Caco-2 (cell line): ENCODE measurements at regions of chr6 and their contacts with region 1.

Region 1: GRCh38 chr6:20706243-20706938 is 172.1 kb downstream of the CDKAL1 start:
- DNase-seq: peak in 1 of 2 experiments; percentile 23
- H3K4me3 ChIP-seq: no peak overlapping the region
- H3K4me3 Mint-ChIP-seq: no peak overlapping the region
- H3K27ac Mint-ChIP-seq: no peak overlapping the region
- H3K4me1 ChIP-seq: peaks cover 23% of the 10 kb centered on the region
- H3K4me1 Mint-ChIP-seq: peaks cover 15% of the 10 kb centered on the region
- H3K27me3 ChIP-seq: no peaks in the 10 kb centered on the region
- H3K27me3 Mint-ChIP-seq: no peaks in the 10 kb centered on the region
- CTCF ChIP-seq: no peak

Region 2: DNA sequence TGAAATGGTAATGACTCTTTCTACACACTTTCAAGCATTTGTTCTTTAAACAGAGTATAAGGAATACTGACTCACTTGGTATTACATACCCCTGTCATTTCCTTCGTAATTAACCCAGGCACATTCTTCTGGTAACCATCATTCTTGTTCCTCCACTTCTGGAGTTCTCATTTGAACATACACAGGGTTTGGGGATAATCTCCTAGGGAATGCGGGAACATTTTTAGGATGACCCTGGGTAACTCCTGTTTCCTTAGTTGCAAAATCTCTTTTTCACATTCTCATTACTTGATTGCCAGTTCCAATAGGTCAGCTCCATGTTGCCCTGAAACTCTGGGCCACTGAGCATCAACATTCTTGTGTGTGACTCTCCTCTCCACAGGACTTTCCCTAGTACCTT is 356.2 kb before region 1 on chr6:
- CTCF ChIA-PET with region 1: no interaction called
- POLR2A ChIA-PET with region 1: interaction called, 19 read pairs
- intact Hi-C with region 1: no loop called
- DNase-seq: no peak
- H3K4me3 ChIP-seq: no peak overlapping the region
- H3K4me3 Mint-ChIP-seq: no peak overlapping the region
- H3K27ac Mint-ChIP-seq: no peak overlapping the region
- H3K4me1 ChIP-seq: peaks cover 18% of the 10 kb centered on the region
- H3K4me1 Mint-ChIP-seq: peaks cover 21% of the 10 kb centered on the region
- H3K27me3 ChIP-seq: no peaks in the 10 kb centered on the region
- H3K27me3 Mint-ChIP-seq: no peaks in the 10 kb centered on the region
- CTCF ChIP-seq: no peak

Region 3: DNA sequence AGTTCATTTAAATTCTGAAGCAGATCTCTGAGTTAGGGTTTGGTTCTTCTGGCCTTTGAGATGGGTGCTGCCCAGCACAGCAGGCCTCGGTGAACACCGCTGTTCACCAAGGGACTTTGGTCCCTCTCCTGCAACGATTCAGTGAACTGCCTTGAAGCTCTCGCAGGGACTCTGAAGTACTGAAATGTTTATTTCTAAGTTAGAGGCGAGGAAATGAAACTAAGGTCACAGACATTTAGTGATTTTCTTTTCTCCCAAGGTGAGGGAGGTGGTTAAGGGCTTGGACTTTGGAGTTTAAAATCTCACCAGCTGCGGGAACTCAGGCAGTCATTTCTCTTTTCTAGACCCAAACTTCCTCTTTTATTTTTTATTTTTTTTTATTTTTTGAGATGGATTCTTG is 278.5 kb before region 1 on chr6:
- CTCF ChIA-PET with region 1: no interaction called
- POLR2A ChIA-PET with region 1: no interaction called
- intact Hi-C with region 1: no loop called
- DNase-seq: no peak
- H3K4me3 ChIP-seq: no peak overlapping the region
- H3K4me3 Mint-ChIP-seq: no peak overlapping the region
- H3K27ac Mint-ChIP-seq: no peak overlapping the region
- H3K4me1 ChIP-seq: 0 out of 2 replicates have a peak, but pooled peaks cover 6% of the 10 kb centered on the region
- H3K4me1 Mint-ChIP-seq: peaks cover 11% of the 10 kb centered on the region
- H3K27me3 ChIP-seq: no peaks in the 10 kb centered on the region
- H3K27me3 Mint-ChIP-seq: no peaks in the 10 kb centered on the region
- CTCF ChIP-seq: no peak

Region 4: GRCh38 chr6:20610636-20611370 is 95.6 kb before region 1 on chr6:
- CTCF ChIA-PET with region 1: no interaction called
- POLR2A ChIA-PET with region 1: no interaction called
- intact Hi-C with region 1: no loop called
- DNase-seq: no peak
- H3K4me3 ChIP-seq: no peak overlapping the region
- H3K4me3 Mint-ChIP-seq: no peak overlapping the region
- H3K27ac Mint-ChIP-seq: no peak overlapping the region
- H3K4me1 ChIP-seq: peaks cover 10% of the 10 kb centered on the region
- H3K4me1 Mint-ChIP-seq: peaks cover 12% of the 10 kb centered on the region
- H3K27me3 ChIP-seq: no peaks in the 10 kb centered on the region
- H3K27me3 Mint-ChIP-seq: no peaks in the 10 kb centered on the region
- CTCF ChIP-seq: no peak